AG04450 (cell line): ENCODE measurements at regions of chr12 and their contacts with region 1.

Region 1: GRCh38 chr12:99957866-99958466 is 26.8 kb downstream of the ANKS1B start:
- DNase-seq: no peak
- H3K4me3 ChIP-seq: no peak overlapping the region
- H3K27ac ChIP-seq: no peak overlapping the region
- H3K27me3 ChIP-seq: no peaks in the 10 kb centered on the region
- CTCF ChIP-seq: no peak

Region 2: GRCh38 chr12:99861731-99862130 is 96.2 kb before region 1 on chr12:
- CTCF ChIA-PET with region 1: interaction called, 12 read pairs
- POLR2A ChIA-PET with region 1: no interaction called
- DNase-seq: no peak
- H3K4me3 ChIP-seq: no peak overlapping the region
- H3K27ac ChIP-seq: no peak overlapping the region
- H3K27me3 ChIP-seq: no peaks in the 10 kb centered on the region
- CTCF ChIP-seq: no peak

Region 3: GRCh38 chr12:99926511-99927169 is 31.3 kb before region 1 on chr12:
- CTCF ChIA-PET with region 1: no interaction called
- POLR2A ChIA-PET with region 1: no interaction called
- DNase-seq: no peak
- H3K4me3 ChIP-seq: no peak overlapping the region
- H3K27ac ChIP-seq: no peak overlapping the region
- H3K27me3 ChIP-seq: no peaks in the 10 kb centered on the region
- CTCF ChIP-seq: no peak